Activated naive CD4-positive, alpha-beta T cell treated with anti-CD3 and anti-CD28 coated beads for 36 hours (primary cell): ENCODE measurements at regions of chr19 and their contacts with region 1.

Region 1: DNA sequence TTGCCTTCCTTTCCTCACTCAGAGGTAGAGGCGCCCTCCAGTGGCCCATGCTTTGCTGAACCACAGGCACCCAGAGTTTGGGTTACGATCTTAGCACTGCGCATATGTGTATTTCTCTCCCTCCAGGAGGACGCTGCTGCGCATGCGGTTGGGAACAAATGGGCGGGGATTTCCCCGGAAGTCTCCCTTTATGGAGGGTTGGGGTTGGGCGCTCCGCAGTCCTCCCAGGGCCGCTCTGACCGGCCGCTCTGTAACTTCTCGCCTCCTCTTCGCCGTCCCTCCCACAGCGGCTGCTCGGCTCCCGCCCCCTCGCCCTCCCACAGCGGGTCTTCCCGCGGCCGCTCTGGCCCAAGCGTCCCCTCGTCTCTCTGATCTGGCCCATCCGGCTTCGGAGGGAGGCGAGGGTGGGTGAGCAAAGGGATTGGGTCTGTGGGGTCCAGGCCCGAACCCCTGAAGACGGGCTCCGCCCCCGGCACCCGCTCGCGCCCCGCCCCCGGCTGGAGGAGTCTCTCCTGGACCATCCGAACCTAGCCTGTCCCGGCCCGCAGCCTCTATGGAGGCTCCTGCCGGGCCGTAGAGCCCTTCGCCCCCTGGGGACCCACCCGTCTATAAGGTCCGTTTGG is at the start of gene MEGF8:
- DNase-seq: peak; percentile 100
- H3K4me3 Mint-ChIP-seq: peak within 1 kb of the TSS; percentile 81
- H3K27ac Mint-ChIP-seq: peak within 1 kb of the TSS; percentile 16
- H3K4me1 Mint-ChIP-seq: peaks cover 13% of the 10 kb centered on the region
- H3K27me3 Mint-ChIP-seq: peaks cover 14% of the 10 kb centered on the region
- total RNA-seq, gene MEGF8: 3.3 to 4.0 TPM

Region 2: GRCh38 chr19:41859618-41860418 is 465.6 kb before region 1 on chr19 and contains the start of gene RPS19:
- CTCF ChIA-PET with region 1: no interaction called
- intact Hi-C with region 1: loop called (anchors 1 kb)
- DNase-seq: peak; percentile 99
- H3K4me3 Mint-ChIP-seq: peak within 1 kb of the TSS; percentile 90
- H3K27ac Mint-ChIP-seq: peak within 1 kb of the TSS; percentile 97
- H3K4me1 Mint-ChIP-seq: peaks cover 46% of the 10 kb centered on the region
- H3K27me3 Mint-ChIP-seq: no peaks in the 10 kb centered on the region
- total RNA-seq, gene RPS19: 4,092 to 4,109 TPM

Region 3: GRCh38 chr19:42038666-42039065 is 286.7 kb before region 1 on chr19:
- CTCF ChIA-PET with region 1: no interaction called
- intact Hi-C with region 1: no loop called
- DNase-seq: no peak
- H3K4me3 Mint-ChIP-seq: no peak overlapping the region
- H3K27ac Mint-ChIP-seq: no peak overlapping the region
- H3K4me1 Mint-ChIP-seq: no peaks in the 10 kb centered on the region
- H3K27me3 Mint-ChIP-seq: no peaks in the 10 kb centered on the region

Region 4: DNA sequence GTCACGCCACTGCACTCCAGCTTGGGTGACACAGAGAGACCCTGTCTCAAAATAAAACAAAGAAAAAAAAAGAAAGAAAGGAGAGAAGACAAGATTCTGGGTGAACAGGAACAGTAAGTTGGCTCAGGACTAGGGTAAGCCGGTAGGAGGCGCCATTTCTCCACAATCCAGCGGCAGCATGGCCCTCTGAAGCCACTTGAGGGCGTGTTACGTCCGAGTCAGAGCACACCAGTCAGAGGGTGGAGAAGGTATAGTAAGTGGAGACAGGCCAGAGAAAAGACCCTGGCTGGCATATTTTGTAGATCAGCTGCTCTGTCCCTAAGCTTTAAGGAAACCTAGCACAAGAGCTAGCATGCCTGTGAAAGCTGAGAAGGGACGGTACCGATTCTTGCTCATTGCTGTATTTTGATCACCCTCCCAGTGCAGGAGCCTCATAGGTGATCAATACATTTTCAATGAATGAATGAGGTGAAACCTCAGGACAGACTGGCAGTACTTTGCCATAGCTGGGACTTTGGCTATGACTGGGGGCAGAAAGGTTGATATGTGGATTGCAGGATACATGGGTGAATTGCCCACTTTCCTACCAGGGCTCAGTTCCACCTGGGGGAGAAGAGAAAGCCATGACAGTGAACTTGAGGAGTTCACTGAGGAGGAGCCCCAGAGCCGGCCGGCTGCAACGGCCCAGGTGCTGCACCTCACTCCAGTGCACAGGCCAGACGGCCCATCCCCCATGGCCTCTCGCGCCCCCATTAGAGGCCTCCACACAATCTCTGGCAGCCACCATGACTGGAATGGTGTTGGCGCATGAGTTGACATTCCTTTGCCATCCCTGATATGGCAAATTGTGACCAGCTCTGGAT is 216.6 kb before region 1 on chr19:
- CTCF ChIA-PET with region 1: interaction called, 3 read pairs
- intact Hi-C with region 1: loop called (anchors 1 kb)
- DNase-seq: peak; percentile 97
- H3K4me3 Mint-ChIP-seq: no peak overlapping the region
- H3K27ac Mint-ChIP-seq: peak overlapping the region; percentile 44
- H3K4me1 Mint-ChIP-seq: peaks cover 55% of the 10 kb centered on the region
- H3K27me3 Mint-ChIP-seq: no peaks in the 10 kb centered on the region

Region 5: GRCh38 chr19:42219812-42220750 is 105.3 kb before region 1 on chr19 and contains the start of gene ZNF526:
- CTCF ChIA-PET with region 1: no interaction called
- intact Hi-C with region 1: loop called (anchors 1 kb)
- DNase-seq: peak; percentile 97
- H3K4me3 Mint-ChIP-seq: peak within 1 kb of the TSS; percentile 96
- H3K27ac Mint-ChIP-seq: peak within 1 kb of the TSS; percentile 94
- H3K4me1 Mint-ChIP-seq: peaks cover 55% of the 10 kb centered on the region
- H3K27me3 Mint-ChIP-seq: no peaks in the 10 kb centered on the region
- total RNA-seq, gene ZNF526: 11.5 to 11.6 TPM

Region 6: DNA sequence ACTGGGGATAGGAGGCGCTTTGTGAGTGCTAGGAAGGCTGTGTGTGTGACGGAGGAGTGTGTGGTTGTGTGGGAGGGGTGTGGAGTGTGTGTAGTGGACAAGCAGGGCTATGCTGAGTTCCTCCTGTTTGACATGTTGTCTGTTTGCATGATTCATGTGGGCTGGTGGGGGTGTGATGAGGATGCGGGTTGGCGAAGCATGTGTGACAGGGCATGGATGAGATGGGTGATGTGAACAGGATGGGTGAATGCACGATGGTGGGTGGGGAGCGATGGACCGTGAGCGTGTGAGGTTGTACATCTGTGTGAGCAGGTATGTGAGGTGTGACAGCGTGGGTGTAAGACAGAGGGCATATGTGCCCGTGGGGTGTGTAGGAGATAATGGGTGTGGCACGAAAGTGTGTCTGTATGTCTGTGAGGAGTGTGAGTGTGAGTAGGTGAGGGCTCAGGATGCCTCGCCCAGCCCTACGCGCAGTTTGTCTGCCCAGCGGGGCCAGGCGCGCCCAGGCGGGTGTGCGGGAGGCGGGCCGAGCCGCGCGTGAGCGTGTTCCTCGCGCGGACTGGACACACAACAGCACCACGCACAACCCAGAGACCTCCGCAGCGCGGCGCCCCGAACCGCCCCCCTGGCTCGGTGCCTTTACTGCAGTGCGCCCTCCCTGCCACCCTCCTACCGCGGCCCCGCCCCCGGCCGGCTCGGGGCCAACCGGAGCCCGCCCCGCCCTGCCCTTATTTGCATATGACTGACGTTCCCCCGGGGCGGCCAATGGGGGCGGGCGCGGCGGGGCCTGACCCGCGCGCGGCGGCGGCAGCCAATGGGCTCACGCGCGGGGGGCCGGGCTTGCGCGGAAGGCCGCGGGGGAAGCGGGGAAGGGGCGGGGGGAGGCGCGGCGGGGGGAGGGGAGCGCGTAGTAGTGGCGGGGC is 42.0 kb before region 1 on chr19:
- CTCF ChIA-PET with region 1: no interaction called
- intact Hi-C with region 1: loop called (anchors 1 kb)
- DNase-seq: peak; percentile 96
- H3K4me3 Mint-ChIP-seq: peak overlapping the region; percentile 7
- H3K27ac Mint-ChIP-seq: no peak overlapping the region
- H3K4me1 Mint-ChIP-seq: peaks cover 45% of the 10 kb centered on the region
- H3K27me3 Mint-ChIP-seq: no peaks in the 10 kb centered on the region

Region 7: GRCh38 chr19:42335374-42335936 is 10.1 kb after region 1 on chr19:
- CTCF ChIA-PET with region 1: no interaction called
- intact Hi-C with region 1: no loop called
- DNase-seq: no peak
- H3K4me3 Mint-ChIP-seq: no peak overlapping the region
- H3K27ac Mint-ChIP-seq: no peak overlapping the region
- H3K4me1 Mint-ChIP-seq: no peaks in the 10 kb centered on the region
- H3K27me3 Mint-ChIP-seq: no peaks in the 10 kb centered on the region

Region 8: DNA sequence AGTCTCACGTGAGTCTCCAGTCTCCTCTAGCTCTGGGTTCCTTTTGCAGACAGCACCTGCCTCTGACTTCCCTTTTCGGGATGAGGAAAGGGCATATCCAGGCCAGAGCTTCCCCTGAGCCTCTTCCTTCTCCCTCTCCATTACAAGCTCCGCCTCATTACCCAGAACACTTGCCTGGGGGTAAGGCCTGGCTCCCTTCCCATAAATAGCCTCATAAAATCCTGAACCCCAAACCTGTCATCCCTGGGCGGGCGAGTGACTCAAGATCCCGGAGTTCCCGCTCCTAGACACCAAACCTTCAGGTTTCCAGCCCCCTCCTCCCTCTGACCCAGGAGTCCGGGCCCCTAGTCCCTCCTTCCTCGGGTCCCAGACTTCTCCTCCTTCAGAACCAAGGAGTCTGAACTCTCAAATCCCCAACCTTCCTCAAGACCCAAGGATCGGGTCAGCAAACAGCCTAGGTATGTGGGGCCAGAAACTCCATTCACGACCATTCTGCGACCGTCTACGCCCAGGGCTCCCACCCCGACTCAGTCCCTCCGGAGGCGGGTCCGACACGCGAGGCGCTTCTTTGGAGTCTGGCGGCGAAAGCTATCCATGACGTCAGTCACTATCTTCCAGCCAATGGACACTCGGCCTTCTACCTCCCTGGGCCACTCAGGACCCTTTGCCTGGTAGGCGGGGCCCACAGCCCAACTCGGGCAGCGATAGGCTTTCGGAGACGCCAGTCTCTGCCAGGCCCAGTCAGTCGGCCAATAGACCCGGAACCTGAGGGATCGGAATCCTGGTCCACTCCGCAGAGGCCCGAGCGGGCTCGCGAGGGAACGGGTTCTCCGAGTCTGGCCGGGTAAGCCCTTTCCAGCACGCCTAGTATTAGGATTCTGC is 71.2 kb after region 1 on chr19:
- CTCF ChIA-PET with region 1: interaction called, 6 read pairs
- intact Hi-C with region 1: loop called (anchors 2 kb)
- DNase-seq: peak; percentile 98
- H3K4me3 Mint-ChIP-seq: peak overlapping the region; percentile 89
- H3K27ac Mint-ChIP-seq: peak overlapping the region; percentile 88
- H3K4me1 Mint-ChIP-seq: peaks cover 32% of the 10 kb centered on the region
- H3K27me3 Mint-ChIP-seq: no peaks in the 10 kb centered on the region